ENCODE measurements at regions of chr12 and their contacts with region 1.

Region 1: DNA sequence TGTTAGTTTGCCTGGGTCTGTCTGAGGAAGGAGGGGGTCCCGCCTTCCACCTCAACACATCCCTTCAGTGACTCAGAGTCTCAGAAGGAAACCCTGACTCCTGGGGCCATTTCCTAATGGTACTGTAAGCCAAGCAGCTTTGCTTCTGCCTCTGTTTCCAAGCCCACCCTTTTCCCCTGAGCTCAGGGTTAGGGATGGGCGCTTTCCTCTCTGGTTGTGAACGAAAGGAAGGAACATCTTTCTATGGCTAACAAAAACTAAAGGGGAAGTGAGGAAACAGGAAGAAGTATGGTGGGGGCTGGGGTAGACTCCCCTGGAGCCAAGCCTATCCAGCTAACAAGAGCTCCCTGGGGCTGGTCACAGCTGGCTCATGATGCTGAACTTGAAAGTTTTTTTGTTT is 11.6 kb upstream of the UNC119B start:
- DNase-seq: no peak
- ATAC-seq: no peak
- H3K4me3 ChIP-seq: no peak overlapping the region
- H3K27ac ChIP-seq: no peak overlapping the region
- H3K4me1 ChIP-seq: peaks cover 5% of the 10 kb centered on the region
- CTCF ChIP-seq: no peak
- EP300 ChIP-seq: no peak
- POLR2A ChIP-seq: no peak
- RAD21 ChIP-seq: no peak

Region 2: DNA sequence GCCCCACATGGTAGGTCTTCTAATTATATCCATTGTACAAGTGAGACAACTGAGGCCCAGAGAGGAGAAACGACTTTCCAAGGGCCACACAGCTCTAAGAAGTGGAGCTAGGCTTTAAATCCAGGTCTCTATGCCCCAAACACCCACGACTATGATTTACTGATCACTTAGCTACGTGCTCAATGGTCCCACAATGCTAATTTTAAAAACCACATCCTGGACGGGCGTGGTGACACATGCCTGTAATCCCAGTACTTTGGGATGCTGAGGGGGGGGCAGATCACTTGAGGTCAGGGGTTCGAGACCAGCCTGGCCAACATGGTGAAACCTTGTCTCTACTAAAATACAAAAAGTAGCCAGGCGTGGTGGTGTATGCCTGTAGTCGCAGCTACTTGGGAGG is 20.1 kb before region 1 on chr12:
- CTCF ChIA-PET with region 1: no interaction called
- POLR2A ChIA-PET with region 1: no interaction called
- DNase-seq: no peak
- ATAC-seq: no peak
- H3K4me3 ChIP-seq: no peak overlapping the region
- H3K27ac ChIP-seq: no peak overlapping the region
- H3K4me1 ChIP-seq: peaks cover 11% of the 10 kb centered on the region
- CTCF ChIP-seq: no peak
- EP300 ChIP-seq: no peak
- POLR2A ChIP-seq: no peak
- RAD21 ChIP-seq: no peak

Region 3: GRCh38 chr12:120710031-120710804 is 11.6 kb after region 1 on chr12 and contains the start of gene UNC119B:
- CTCF ChIA-PET with region 1: interaction called, 13 read pairs
- POLR2A ChIA-PET with region 1: no interaction called
- DNase-seq: peak; percentile 52 to 79
- ATAC-seq: peak; percentile 87 to 89
- H3K4me3 ChIP-seq: peak within 1 kb of the TSS; percentile 75
- H3K27ac ChIP-seq: peak within 1 kb of the TSS; percentile 85 to 96
- H3K4me1 ChIP-seq: peaks cover 20% of the 10 kb centered on the region
- CTCF ChIP-seq: no peak
- EP300 ChIP-seq: no peak
- POLR2A ChIP-seq: peak; percentile 82
- RAD21 ChIP-seq: no peak
- polyA plus RNA-seq, gene UNC119B: 37.5 and 41.5 TPM in 2 replicates